Sciatic nerve (tissue), 2 donors: ENCODE measurements at regions of chr17 and their contacts with region 1.

Region 1: GRCh38 chr17:32593003-32593402 is 106.2 kb downstream of the CDK5R1 start:
- DNase-seq: no peak
- ATAC-seq: no peak

Region 2: GRCh38 chr17:32542186-32542585 is 50.8 kb before region 1 on chr17:
- intact Hi-C with region 1: loop called (anchors 1 kb)
- DNase-seq: no peak
- ATAC-seq: no peak

Region 3: DNA sequence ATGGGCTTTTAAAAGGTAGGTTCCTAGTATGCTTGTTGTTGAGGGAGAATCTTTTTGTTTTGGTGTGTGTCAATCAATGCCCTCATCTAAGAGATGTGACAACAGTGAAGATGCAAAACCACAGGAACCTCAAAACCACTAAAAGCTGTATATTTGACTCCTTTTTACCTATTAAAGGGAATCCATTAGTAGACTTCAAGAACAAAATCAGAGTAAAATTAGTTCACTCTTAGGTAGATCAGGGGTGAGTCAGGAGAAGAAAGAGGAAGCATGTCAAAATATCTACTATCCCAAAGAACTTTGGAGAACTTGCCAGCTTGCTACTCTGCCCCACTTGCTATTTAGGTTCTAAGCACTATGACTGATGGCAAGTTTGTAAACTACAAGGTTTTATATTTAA is 17.1 kb before region 1 on chr17:
- intact Hi-C with region 1: loop called (anchors 1 kb)
- DNase-seq: no peak
- ATAC-seq: no peak